AG04449 (cell line): ENCODE measurements at regions of chr7 and their contacts with region 1.

Region 1: DNA sequence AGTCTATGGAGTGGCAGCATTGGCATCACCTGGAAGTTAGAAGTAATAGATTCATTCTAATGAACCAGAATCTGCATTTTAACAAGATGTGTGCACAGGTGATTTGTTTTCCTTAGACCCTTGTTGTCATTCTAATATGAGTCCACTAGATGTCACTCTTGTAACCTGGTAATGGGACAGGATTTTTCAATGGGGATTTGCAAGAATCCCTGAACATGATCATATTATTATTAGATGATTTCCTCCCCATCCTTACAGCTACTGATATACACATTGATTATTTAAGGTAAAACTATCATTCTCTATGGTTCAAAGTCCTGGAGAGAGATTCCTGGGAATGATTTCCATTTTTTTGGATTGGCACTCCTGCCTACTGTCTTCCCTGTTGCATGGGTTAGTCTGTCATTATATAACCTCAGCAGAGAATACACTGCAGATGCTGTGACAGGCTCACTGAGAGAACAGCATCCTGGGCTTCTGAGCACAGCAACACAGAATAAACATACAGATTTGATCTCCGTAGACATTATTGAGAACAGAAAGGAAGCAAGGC is 194.9 kb downstream of the SUGCT start:
- DNase-seq: no peak
- H3K4me3 ChIP-seq: no peak overlapping the region
- CTCF ChIP-seq: peak; percentile 43

Region 2: DNA sequence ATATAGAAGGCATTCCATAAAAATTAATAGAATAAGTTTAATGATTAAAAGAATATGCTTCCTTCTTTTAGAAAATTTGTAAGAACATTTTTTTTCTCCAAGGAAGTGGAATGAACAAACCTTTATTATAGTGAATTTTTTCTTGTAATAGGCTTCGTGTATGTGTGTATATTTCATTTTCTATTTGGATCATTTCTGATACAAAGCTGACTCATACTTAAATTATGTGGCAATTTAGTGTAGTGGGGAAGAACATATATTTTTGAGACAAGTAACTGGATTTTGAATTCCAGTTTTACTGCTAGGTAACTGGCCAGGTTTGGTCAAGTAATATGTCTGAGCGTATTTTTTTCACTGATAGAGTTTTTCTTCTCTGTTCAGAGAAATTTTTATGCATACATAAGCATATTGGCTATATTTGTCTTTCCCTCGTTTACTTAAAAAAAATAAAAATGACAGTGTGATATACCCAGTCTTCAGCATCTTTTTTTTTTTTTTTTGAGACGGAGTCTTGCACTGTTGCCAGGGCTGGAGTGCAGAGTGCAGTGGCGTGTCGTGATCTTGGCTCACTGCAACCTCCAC is 328.9 kb before region 1 on chr7:
- CTCF ChIA-PET with region 1: no interaction called
- POLR2A ChIA-PET with region 1: no interaction called
- DNase-seq: no peak
- H3K4me3 ChIP-seq: no peak overlapping the region
- CTCF ChIP-seq: no peak

Region 3: DNA sequence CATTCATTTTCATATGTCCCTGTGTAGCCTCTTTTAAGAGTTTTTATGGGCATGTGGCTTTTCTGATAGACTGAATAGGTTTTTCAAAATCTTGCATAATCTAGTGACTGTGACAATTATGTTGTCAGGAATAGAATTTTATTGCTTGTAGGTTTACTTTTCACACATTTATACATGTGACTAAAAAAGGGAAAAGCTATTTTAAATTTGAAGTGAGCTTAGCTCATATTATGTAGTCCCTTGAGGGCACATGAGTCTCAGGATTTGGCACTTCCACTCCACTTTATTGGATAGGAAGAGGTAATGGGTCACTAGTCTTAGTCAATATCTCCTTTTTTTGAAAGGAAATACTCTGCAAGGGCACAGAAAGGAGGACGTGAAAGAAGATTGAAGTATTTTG is 52.5 kb after region 1 on chr7:
- CTCF ChIA-PET with region 1: no interaction called
- POLR2A ChIA-PET with region 1: no interaction called
- DNase-seq: no peak
- H3K4me3 ChIP-seq: no peak overlapping the region
- CTCF ChIP-seq: no peak

Region 4: GRCh38 chr7:40483630-40484029 is 154.0 kb after region 1 on chr7:
- CTCF ChIA-PET with region 1: interaction called, 10 read pairs
- POLR2A ChIA-PET with region 1: no interaction called
- DNase-seq: no peak
- H3K4me3 ChIP-seq: no peak overlapping the region
- CTCF ChIP-seq: peak; percentile 19

Region 5: GRCh38 chr7:40604601-40605438 is 275.1 kb after region 1 on chr7:
- CTCF ChIA-PET with region 1: interaction called, 18 read pairs
- POLR2A ChIA-PET with region 1: no interaction called
- DNase-seq: no peak
- H3K4me3 ChIP-seq: no peak overlapping the region
- CTCF ChIP-seq: peak; percentile 60

Region 6: GRCh38 chr7:40763318-40764287 is 433.9 kb after region 1 on chr7:
- CTCF ChIA-PET with region 1: interaction called, 51 read pairs
- POLR2A ChIA-PET with region 1: interaction called, 3 read pairs
- DNase-seq: peak; percentile 83
- H3K4me3 ChIP-seq: peak overlapping the region; percentile 29; the same call in 1 of the 2 replicates
- CTCF ChIP-seq: peak; percentile 59